Activated CD4-positive, alpha-beta T cell treated with anti-CD3 and anti-CD28 coated beads for 36 hours (primary cell): ENCODE measurements at regions of chr11 and their contacts with region 1.

Region 1: DNA sequence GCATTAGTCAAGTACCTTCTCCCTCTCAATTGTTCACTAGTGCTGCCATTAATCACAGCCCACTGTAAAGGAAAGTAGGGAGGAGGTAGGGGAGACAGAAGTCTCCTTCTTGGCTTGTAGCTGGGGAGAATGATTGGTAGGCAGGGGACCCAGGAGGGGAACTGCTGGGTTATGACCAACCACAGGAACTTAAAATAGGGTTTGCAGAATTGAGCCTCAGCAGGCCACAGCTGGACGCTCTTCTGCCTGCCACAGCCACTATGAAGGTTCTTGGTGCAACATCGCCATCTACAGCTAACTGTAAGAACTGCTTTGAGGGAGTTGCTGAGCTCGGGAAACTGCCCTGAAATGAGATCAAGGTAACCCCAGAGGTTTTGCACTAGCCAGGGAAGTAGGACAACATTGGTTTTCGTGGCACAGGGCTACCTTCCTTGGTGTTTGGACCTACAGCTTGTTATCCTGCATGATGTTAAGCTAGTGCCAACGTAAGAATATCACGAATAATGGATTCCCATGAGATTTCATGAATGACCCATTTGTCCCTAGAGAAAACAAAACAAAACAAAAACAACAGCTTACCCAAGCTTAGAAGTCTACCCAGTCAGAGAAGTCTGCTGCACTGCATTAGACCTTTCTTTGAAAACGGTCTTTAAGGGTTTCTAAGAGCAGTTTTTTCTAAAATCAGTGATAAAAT is 787.1 kb upstream of the API5 start:
- DNase-seq: peak; percentile 44
- ATAC-seq: no peak
- H3K4me3 Mint-ChIP-seq: no peak overlapping the region
- H3K27ac Mint-ChIP-seq: no peak overlapping the region
- H3K4me1 Mint-ChIP-seq: no peaks in the 10 kb centered on the region
- H3K27me3 Mint-ChIP-seq: no peaks in the 10 kb centered on the region

Region 2: DNA sequence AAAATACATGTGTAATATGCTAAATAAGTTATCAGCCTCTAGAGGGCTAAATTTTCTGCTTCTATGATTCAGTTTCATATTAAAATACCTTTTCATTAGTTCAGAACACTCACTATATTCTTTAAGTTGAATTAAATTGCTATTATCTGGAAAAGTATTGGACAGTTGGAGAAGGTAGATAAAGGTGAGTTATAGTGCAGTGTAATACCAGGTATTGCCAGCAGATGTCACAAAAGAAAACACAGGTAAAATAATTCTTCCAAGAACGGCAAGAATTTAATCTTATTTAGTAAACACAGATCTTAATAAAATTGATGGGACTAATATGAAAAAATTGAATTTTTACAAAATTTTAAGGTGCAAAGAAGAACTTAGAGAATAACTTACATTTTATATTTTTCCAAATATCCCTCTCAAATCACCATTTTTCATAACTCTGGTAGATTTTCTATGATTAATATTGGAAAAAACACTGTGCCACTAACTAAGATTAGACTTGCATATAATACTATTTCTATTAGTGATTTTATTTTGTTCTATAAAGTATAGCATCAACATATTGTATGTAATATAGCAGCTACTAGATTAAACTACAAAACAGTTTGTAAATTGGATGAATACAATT is 1063.5 kb before region 1 on chr11:
- CTCF ChIA-PET with region 1: interaction called, 3 read pairs
- POLR2A ChIA-PET with region 1: no interaction called
- intact Hi-C with region 1: loop called in 1 of 2 experiments (anchors 1 kb)
- DNase-seq: no peak
- ATAC-seq: no peak
- H3K4me3 Mint-ChIP-seq: no peak overlapping the region
- H3K27ac Mint-ChIP-seq: no peak overlapping the region
- H3K4me1 Mint-ChIP-seq: no peaks in the 10 kb centered on the region
- H3K27me3 Mint-ChIP-seq: peaks cover 14% of the 10 kb centered on the region

Region 3: GRCh38 chr11:43101113-43101512 is 576.4 kb after region 1 on chr11:
- CTCF ChIA-PET with region 1: no interaction called
- POLR2A ChIA-PET with region 1: no interaction called
- intact Hi-C with region 1: no loop called
- DNase-seq: no peak
- ATAC-seq: no peak
- H3K4me3 Mint-ChIP-seq: no peak overlapping the region
- H3K27ac Mint-ChIP-seq: no peak overlapping the region
- H3K4me1 Mint-ChIP-seq: no peaks in the 10 kb centered on the region
- H3K27me3 Mint-ChIP-seq: no peaks in the 10 kb centered on the region